ENCODE measurements at regions of chr2 and their contacts with region 1.

Region 1: DNA sequence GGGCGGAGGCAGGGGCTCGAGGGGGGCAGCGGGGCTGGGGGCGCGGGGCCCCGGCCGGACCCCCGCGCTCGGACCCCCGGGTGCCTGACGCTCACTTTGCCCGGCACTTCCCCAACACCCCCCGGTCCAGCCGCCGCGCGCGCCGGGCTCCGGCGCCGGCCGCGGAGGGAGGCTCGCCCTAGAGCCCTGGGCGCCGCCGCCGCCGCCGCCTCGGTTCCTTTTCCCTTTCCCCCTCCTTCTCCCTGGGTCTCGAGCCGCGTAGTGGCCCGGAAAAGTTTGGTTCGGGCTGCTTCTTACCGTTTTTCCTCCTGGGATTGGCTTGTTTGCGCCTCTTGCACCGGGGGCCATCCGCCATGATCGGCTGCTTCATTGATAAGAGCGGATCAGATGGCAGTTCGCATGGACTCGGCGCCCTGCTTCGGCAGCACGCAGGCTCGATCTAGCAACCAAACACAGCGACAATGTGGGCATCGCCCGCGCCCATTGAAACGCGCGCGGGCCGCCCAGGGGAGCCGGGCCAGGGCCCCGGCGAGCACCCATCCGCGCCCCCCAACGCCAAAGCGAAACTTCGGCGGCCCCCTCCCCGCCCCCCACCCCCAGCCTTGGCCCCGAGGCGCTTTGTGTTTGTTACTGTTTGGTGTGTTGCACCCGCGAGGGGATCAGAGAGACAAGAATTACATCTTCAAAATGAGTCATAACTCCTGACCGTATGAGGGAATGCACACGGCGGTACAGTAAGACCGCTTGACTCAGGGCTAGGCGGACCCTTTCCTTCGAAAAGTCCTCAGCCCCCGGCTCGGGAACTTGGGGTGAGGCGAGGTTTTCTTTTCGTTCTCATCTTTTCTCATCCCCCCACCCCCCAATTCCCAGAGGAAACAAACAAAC is 2.7 kb downstream of the ZEB2 start:
- DNase-seq: peak; percentile 67
- ATAC-seq: peak; percentile 58
- H3K4me3 Mint-ChIP-seq: no peak overlapping the region
- H3K27ac Mint-ChIP-seq: no peak overlapping the region
- H3K4me1 Mint-ChIP-seq: peaks cover 47% of the 10 kb centered on the region
- H3K27me3 Mint-ChIP-seq: no peaks in the 10 kb centered on the region
- CTCF ChIP-seq: no peak

Region 2: GRCh38 chr2:144183727-144184126 is 333.5 kb before region 1 on chr2:
- CTCF ChIA-PET with region 1: no interaction called
- POLR2A ChIA-PET with region 1: no interaction called
- intact Hi-C with region 1: loop called (anchors 1 kb)
- DNase-seq: peak; percentile 35
- ATAC-seq: peak; percentile 96
- H3K4me3 Mint-ChIP-seq: peak overlapping the region; percentile 82
- H3K27ac Mint-ChIP-seq: peak overlapping the region; percentile 85
- H3K4me1 Mint-ChIP-seq: peaks cover 28% of the 10 kb centered on the region
- H3K27me3 Mint-ChIP-seq: no peaks in the 10 kb centered on the region
- CTCF ChIP-seq: no peak

Region 3: GRCh38 chr2:144382849-144383248 is 134.4 kb before region 1 on chr2:
- CTCF ChIA-PET with region 1: no interaction called
- POLR2A ChIA-PET with region 1: no interaction called
- intact Hi-C with region 1: loop called (anchors 2 kb)
- DNase-seq: no peak
- ATAC-seq: peak; percentile 97
- H3K4me3 Mint-ChIP-seq: peak overlapping the region; percentile 50
- H3K27ac Mint-ChIP-seq: peak overlapping the region; percentile 72
- H3K4me1 Mint-ChIP-seq: peaks cover 44% of the 10 kb centered on the region
- H3K27me3 Mint-ChIP-seq: no peaks in the 10 kb centered on the region
- CTCF ChIP-seq: no peak

Region 4: DNA sequence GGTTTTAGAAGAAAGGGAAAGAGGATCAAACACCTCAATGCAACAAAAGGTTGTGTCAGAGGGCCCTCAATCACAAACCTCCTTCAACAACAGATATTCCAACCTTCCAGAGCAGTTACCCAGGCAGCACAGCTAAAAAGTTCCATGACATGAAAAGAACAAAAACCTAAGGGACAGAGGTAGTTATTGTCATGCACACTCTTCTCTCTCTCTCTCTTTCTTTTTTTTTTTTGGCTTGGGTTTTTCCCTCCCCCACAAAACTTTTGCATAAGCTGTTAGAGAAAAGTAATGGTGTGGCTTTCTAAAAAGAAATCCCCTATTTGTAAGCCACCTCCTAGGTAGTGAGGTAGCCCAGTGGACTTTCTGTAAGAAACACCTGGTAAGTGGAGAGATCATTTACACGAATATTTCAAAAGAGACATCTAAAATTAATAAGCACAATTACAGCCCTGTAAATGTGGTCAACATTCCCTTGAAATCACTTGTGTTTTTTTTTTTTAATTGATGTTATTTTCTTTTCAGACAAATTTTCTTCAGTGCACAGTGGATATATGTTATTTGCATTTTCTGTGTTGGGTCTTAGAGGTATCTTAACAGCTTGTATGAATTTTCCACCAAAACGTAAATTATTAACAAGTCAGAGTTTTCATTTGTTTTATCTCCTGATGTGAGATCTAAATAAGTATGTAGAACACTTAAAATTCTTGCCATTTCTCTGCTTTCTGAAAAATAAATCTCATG is 45.7 kb before region 1 on chr2:
- CTCF ChIA-PET with region 1: no interaction called
- POLR2A ChIA-PET with region 1: interaction called, 3 read pairs
- intact Hi-C with region 1: loop called (anchors 1 kb)
- DNase-seq: no peak
- ATAC-seq: peak; percentile 89
- H3K4me3 Mint-ChIP-seq: peak overlapping the region; percentile 52
- H3K27ac Mint-ChIP-seq: no peak overlapping the region
- H3K4me1 Mint-ChIP-seq: peaks cover 30% of the 10 kb centered on the region
- H3K27me3 Mint-ChIP-seq: no peaks in the 10 kb centered on the region
- CTCF ChIP-seq: no peak

Region 5: GRCh38 chr2:144541396-144541795 is 24.2 kb after region 1 on chr2:
- CTCF ChIA-PET with region 1: no interaction called
- POLR2A ChIA-PET with region 1: no interaction called
- intact Hi-C with region 1: no loop called
- DNase-seq: no peak
- ATAC-seq: no peak
- H3K4me3 Mint-ChIP-seq: no peak overlapping the region
- H3K27ac Mint-ChIP-seq: no peak overlapping the region
- H3K4me1 Mint-ChIP-seq: peaks cover 5% of the 10 kb centered on the region
- H3K27me3 Mint-ChIP-seq: no peaks in the 10 kb centered on the region
- CTCF ChIP-seq: no peak

Region 6: DNA sequence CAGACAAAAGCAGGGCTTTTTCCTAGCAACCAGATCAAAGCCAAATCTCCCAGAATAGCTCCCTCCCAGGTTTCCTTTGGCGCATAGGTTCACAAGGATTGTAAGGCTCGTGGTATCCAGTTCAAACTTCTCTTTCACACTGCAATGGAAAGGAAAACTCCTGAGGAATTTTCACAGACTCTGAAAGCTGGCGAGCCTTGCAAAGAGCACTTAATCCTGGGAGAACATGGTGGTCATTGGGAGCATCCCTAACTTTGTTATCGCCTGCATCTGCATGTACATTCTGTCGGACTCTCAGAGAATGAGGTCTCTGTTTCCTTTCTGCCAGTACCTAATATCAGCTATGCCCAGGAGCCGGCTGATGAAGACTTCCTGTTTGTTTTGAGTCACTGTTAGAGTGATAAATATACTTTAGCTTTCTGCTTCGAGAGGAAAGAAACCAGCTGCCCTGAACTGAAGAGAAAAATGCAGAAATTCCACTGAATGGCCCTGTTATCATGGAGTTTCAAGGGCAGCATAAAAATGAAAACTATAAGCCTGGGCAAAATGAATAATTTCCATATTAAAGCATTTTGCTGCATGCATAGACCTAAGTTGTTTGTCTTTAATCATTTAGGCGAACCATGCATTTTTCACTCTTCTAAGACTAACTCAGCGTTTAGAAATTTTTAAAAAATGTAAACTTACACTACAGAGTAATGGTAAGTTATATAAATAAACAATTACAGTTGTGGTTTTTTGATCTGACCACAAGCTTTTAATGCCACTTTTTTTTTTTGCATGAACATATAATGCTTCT is 79.0 kb after region 1 on chr2:
- CTCF ChIA-PET with region 1: no interaction called
- POLR2A ChIA-PET with region 1: interaction called, 11 read pairs
- intact Hi-C with region 1: no loop called
- DNase-seq: no peak
- ATAC-seq: peak; percentile 81
- H3K4me3 Mint-ChIP-seq: peak overlapping the region; percentile 56
- H3K27ac Mint-ChIP-seq: peak overlapping the region; percentile 27
- H3K4me1 Mint-ChIP-seq: peaks cover 35% of the 10 kb centered on the region
- H3K27me3 Mint-ChIP-seq: no peaks in the 10 kb centered on the region
- CTCF ChIP-seq: no peak

Region 7: DNA sequence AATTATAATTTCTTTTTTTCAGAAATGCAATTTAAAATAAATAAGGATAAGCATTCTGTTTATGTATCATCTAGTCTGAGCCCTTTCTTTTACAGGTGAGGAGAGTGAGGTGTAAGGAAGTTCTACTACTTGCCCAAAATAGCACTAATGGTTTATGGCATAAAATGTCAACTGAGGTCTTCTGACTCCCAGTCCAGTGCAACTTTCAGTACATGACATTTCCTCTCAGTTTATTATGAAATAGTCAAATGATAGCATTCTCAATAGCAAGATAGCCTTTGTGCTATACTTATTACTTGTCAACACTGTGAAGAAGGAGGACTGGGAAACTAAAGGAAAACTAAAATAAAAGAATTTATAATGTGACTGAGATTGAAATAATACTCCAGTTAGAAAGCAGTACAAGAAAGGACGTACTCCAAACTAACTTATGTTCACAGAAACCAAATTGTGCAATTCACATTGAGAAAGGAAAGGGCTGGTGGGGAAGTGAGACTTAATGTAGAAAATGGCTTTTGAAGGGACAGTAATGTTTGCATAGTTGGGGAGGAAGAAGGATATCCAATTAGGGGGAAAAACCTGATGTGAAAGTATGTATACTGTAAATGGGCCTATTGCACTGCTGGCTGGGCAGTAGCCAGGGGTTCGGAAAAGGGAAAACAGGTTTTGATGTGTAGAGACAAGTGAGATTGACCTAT is 169.4 kb after region 1 on chr2:
- CTCF ChIA-PET with region 1: no interaction called
- POLR2A ChIA-PET with region 1: no interaction called
- intact Hi-C with region 1: no loop called
- DNase-seq: no peak
- ATAC-seq: peak; percentile 49
- H3K4me3 Mint-ChIP-seq: no peak overlapping the region
- H3K27ac Mint-ChIP-seq: peak overlapping the region; percentile 1
- H3K4me1 Mint-ChIP-seq: peaks cover 34% of the 10 kb centered on the region
- H3K27me3 Mint-ChIP-seq: no peaks in the 10 kb centered on the region
- CTCF ChIP-seq: no peak

Region 8: GRCh38 chr2:144890828-144891227 is 373.6 kb after region 1 on chr2:
- CTCF ChIA-PET with region 1: interaction called, 3 read pairs
- POLR2A ChIA-PET with region 1: interaction called, 4 read pairs
- intact Hi-C with region 1: loop called (anchors 5 kb)
- DNase-seq: no peak
- ATAC-seq: peak; percentile 88
- H3K4me3 Mint-ChIP-seq: no peak overlapping the region
- H3K27ac Mint-ChIP-seq: no peak overlapping the region
- H3K4me1 Mint-ChIP-seq: peaks cover 3% of the 10 kb centered on the region
- H3K27me3 Mint-ChIP-seq: no peaks in the 10 kb centered on the region
- CTCF ChIP-seq: no peak

Region 9: GRCh38 chr2:145692971-145693478 is 1175.8 kb after region 1 on chr2:
- CTCF ChIA-PET with region 1: no interaction called
- POLR2A ChIA-PET with region 1: interaction called, 3 read pairs
- intact Hi-C with region 1: loop called (anchors 2 kb)
- DNase-seq: no peak
- ATAC-seq: peak; percentile 86
- H3K4me3 Mint-ChIP-seq: peak overlapping the region; percentile 71
- H3K27ac Mint-ChIP-seq: peak overlapping the region; percentile 89
- H3K4me1 Mint-ChIP-seq: peaks cover 55% of the 10 kb centered on the region
- H3K27me3 Mint-ChIP-seq: no peaks in the 10 kb centered on the region
- CTCF ChIP-seq: no peak

Measured in activated B cell treated with CpG ODN at 0.5 μM for 24 hours (primary cell).